ENCODE measurements at regions of chr19 and their contacts with region 1.

Region 1: DNA sequence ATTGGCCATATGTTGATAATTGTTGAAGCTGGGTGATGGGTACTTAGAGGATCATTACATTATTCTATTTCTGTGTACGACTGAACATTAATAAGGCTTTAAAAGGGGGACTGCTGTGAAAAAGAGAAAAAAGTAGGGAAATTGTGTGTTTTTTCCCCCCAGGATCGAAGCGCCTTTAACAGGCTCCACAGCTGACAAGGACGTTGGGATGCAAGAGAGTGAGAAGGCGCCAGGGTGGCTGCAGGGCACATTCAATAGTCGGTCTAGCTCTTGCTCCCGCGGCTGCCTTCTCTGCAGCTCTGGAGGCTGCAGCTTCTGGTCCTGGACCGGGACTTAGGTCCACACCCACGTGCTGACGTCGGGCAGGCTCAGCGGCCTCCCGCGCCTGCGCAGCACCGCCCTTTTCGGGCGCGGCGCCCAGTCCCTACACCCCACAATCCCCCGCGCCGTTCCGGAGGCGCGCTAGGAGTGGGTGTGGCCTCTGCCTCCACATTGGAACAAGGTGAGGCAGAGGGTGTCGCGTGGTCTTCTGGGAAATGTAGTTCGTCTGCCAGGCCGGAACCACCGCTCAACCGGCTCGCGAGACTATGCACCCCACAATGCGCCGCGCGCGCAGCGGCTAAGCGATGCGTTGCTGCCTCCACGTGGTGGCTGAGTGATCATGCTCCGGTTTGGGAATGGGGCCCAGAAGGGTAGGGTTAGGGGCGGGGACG is 4.9 kb upstream of the LRFN3 start:
- DNase-seq: peak; percentile 99 to 100 (median 99)
- ATAC-seq: peak; percentile 99
- H3K4me3 ChIP-seq: peak overlapping the region; percentile 13
- H3K27ac ChIP-seq: no peak overlapping the region
- H3K4me1 ChIP-seq: peaks cover 2 to 9% of the 10 kb centered on the region in 2 experiments; a peak in 2 of 5 replicates
- H3K27me3 ChIP-seq: peaks cover 7 to 16% of the 10 kb centered on the region in 2 experiments
- CTCF ChIP-seq: peak; percentile 95 to 98 (median 97)
- EP300 ChIP-seq: peak; percentile 8; the same call in 1 of the 2 replicates
- POLR2A ChIP-seq: peak; percentile 77
- RAD21 ChIP-seq: peak; percentile 100

Region 2: DNA sequence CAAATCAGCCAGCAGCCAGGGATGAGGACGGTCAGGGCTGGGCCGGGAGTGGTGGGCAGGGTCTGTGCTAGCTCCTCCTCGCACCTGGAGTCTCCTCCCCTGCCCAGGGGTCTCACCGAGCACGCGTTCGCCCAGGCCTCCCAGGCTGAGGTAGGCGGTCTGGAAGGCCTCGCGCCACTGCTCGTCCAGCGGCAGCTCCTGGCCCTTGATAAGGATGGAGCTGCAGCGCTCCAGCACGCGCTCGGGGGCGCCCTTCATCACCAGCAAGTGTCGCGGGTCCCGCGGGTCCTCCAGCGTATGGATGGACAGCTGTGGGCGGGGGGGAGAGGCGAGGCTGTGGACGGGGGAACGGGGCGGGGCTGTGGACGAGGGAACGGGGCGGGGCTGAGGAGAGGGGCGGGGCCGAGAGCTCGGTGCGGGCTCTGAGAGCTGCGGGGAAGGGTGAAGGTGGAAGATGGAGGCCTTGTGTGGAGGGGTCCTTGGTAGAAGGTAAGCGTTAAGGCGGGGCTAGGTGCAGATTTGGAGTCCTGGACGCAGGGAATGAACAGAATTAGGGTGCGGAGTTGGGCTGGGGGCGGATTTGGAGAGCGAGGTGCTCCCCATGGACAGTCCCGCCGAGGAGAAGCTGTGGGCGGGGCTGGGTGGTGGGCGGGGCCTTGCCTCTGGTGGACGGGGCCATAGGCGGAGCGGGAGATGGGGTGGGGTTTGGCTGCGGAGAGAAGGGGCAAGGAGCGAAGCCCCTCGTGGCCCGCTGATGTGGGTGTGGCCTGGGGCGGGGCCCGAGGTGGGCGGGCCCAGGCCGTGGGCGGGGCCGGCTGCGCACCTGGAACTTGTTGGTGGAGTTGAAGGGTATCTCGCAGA is 373.5 kb before region 1 on chr19:
- CTCF ChIA-PET with region 1: no interaction called
- POLR2A ChIA-PET with region 1: interaction called, 3 read pairs
- in situ Hi-C with region 1: no loop called
- intact Hi-C with region 1: loop called (anchors 5 kb)
- DNase-seq: peak; percentile 91 to 94 (median 93)
- ATAC-seq: peak; percentile 92
- H3K4me3 ChIP-seq: peak overlapping the region; percentile 55
- H3K27ac ChIP-seq: no peak overlapping the region
- H3K4me1 ChIP-seq: peaks cover 4 to 50% of the 10 kb centered on the region in 2 experiments; a peak in 3 of 5 replicates
- H3K27me3 ChIP-seq: peaks cover 28 to 50% of the 10 kb centered on the region in 2 experiments; a peak in 4 of 5 replicates
- CTCF ChIP-seq: peak; percentile 38 to 79 (median 45); a peak in 4 of 6 replicates
- EP300 ChIP-seq: no peak
- POLR2A ChIP-seq: no peak
- RAD21 ChIP-seq: peak in 1 of 2 experiments; percentile 42; a peak in 2 of 4 replicates

Region 3: DNA sequence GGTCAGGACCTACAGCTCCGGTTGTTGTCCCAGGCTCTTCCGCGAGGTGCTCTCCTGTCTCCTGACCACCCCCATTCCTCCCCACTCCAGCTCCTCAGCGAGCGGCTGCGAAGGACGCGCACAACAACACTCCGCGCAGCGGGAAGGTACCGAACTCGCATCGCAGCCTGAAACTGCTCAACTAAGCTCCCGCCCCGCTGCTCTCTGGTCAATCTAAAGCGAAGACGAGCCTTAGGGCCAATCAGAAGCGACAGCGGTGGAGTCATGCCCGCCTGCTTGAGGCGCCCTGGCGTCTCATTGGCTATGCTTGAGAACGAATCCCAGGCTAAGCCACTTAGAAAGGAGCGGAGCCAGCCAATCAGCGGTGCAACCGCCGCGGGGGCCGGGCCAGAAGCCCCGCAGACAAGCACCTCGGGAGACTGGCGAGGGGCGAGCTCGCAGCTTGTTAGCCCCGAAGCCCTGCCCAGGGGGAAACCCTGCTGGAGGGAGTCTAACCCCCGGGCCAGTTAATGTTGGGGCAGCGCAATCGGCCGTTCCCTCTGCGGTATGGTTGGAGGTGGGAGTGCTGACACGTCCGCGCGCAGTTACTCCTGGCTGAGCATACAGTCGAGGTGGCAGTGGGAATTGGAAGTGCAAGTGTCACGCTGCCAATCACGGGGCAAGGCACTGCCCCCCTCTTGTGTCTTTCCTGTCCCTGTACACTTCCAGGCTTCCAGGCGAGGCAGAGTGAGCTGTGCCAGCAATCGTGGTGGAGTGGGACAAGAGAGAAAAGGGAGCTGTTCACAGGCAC is 228.9 kb before region 1 on chr19:
- CTCF ChIA-PET with region 1: interaction called, 3 read pairs
- POLR2A ChIA-PET with region 1: no interaction called
- in situ Hi-C with region 1: loop called (anchors 5 kb)
- intact Hi-C with region 1: no loop called
- DNase-seq: peak; percentile 97 to 98 (median 98)
- ATAC-seq: peak; percentile 100
- H3K4me3 ChIP-seq: peak overlapping the region; percentile 46
- H3K27ac ChIP-seq: no peak overlapping the region; the same call in 2 of the 3 replicates
- H3K4me1 ChIP-seq: peaks cover 0 to 21% of the 10 kb centered on the region in 2 experiments; a peak in 3 of 5 replicates
- H3K27me3 ChIP-seq: peaks cover 2 to 15% of the 10 kb centered on the region in 2 experiments; a peak in 3 of 5 replicates
- CTCF ChIP-seq: no peak
- EP300 ChIP-seq: no peak
- POLR2A ChIP-seq: no peak
- RAD21 ChIP-seq: no peak

Region 4: GRCh38 chr19:35828692-35829301 is 102.5 kb before region 1 on chr19:
- CTCF ChIA-PET with region 1: no interaction called
- POLR2A ChIA-PET with region 1: no interaction called
- in situ Hi-C with region 1: no loop called
- intact Hi-C with region 1: loop called (anchors 10 kb)
- DNase-seq: peak; percentile 67 to 82 (median 74)
- ATAC-seq: peak; percentile 98
- H3K4me3 ChIP-seq: no peak overlapping the region
- H3K27ac ChIP-seq: no peak overlapping the region
- H3K4me1 ChIP-seq: no peaks in the 10 kb centered on the region; a peak in 1 of 5 replicates
- H3K27me3 ChIP-seq: peaks cover 16 to 35% of the 10 kb centered on the region in 2 experiments
- CTCF ChIP-seq: no peak
- EP300 ChIP-seq: no peak
- POLR2A ChIP-seq: no peak
- RAD21 ChIP-seq: no peak

Region 5: DNA sequence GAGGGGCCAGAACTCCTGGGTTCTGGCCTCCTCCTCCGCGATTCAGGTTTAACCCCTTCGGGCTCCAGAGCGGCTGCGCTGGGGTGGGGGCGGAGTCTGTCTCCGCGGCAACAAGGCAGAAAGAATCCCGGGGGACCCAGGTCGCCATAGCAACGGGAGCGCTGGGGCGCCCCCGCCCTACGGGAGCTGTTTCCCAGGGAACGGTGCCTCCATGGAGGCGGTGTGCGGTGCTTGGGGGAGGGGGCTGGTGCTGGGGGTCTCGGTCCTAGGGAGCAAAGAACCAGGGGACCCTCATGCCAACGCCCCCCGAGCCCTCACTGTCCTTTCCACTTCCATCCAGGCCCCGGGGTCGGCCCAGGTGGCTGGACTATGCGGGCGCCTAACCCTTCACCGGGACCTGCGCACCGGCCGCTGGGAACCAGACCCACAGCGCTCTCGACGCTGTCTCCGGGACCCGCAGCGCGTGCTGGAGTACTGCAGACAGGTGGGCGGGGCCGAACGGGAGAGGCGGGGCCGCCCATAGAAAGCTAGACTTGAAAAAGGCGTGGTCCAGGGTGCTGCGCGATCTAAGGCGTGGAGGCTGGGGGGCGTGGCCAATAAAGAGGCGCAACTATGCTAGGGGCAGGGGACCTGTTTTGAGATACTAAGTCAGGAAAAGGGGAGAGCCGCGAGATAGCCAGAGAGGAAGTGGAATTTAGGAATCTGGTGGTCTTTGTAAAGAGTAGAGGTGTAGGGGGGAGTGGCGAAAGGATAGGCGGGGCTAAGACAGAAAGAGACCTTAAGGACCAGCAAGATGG is 61.8 kb before region 1 on chr19:
- CTCF ChIA-PET with region 1: no interaction called
- POLR2A ChIA-PET with region 1: no interaction called
- in situ Hi-C with region 1: no loop called
- intact Hi-C with region 1: no loop called
- DNase-seq: peak; percentile 87 to 97 (median 89)
- ATAC-seq: peak; percentile 95
- H3K4me3 ChIP-seq: peak overlapping the region; percentile 45
- H3K27ac ChIP-seq: no peak overlapping the region; the same call in 2 of the 3 replicates
- H3K4me1 ChIP-seq: peaks cover 20 to 46% of the 10 kb centered on the region in 2 experiments
- H3K27me3 ChIP-seq: peaks cover 0 to 6% of the 10 kb centered on the region in 2 experiments; a peak in 2 of 5 replicates
- CTCF ChIP-seq: 0 out of 6 replicates have a peak, but pooled peaks of 1 of the 3 experiments have one; percentile 7
- EP300 ChIP-seq: no peak
- POLR2A ChIP-seq: no peak
- RAD21 ChIP-seq: no peak

Region 6: DNA sequence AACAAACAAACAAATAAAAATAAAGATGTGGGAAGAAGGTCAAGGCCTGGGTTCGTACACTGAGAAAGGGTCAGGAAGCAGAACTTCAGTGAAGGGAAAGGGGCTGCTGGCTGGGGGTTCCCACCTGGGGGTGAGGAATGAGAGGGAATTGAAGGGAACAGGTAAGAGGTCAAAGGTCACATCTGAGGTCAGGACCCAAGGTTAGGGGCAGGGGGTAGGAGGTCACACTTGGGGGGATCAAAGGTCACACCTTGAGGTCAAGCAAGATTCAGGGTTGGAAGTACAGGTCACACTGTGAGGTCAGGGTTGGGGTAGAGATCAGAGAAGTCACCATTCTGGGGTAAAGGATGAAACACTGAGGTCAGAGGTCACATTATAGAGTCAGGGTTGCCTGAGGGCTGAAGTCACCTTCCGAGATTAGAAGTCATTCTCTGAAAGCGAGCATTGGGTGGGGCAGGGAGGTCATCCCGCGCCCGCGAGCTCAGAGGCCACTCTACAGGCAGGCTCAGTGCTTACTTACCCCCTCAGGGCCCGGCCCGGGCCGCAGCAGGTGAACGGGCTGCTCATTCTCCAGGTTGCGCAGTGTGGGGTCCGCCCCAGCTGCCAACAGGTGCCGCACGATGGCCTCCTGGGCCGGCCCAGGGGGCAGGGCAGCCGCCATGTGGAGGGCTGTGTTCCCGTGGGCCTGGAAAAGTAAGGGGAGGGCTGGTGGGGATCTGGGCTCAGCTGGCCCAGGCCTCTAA is 41.8 kb before region 1 on chr19:
- CTCF ChIA-PET with region 1: interaction called, 3 read pairs
- POLR2A ChIA-PET with region 1: no interaction called
- in situ Hi-C with region 1: loop called (anchors 5 kb)
- intact Hi-C with region 1: no loop called
- DNase-seq: no peak
- ATAC-seq: no peak
- H3K4me3 ChIP-seq: no peak overlapping the region
- H3K27ac ChIP-seq: no peak overlapping the region
- H3K4me1 ChIP-seq: peaks cover 0 to 5% of the 10 kb centered on the region in 2 experiments; a peak in 1 of 5 replicates
- H3K27me3 ChIP-seq: no peaks in the 10 kb centered on the region
- CTCF ChIP-seq: no peak
- EP300 ChIP-seq: no peak
- POLR2A ChIP-seq: no peak
- RAD21 ChIP-seq: no peak

Region 7: DNA sequence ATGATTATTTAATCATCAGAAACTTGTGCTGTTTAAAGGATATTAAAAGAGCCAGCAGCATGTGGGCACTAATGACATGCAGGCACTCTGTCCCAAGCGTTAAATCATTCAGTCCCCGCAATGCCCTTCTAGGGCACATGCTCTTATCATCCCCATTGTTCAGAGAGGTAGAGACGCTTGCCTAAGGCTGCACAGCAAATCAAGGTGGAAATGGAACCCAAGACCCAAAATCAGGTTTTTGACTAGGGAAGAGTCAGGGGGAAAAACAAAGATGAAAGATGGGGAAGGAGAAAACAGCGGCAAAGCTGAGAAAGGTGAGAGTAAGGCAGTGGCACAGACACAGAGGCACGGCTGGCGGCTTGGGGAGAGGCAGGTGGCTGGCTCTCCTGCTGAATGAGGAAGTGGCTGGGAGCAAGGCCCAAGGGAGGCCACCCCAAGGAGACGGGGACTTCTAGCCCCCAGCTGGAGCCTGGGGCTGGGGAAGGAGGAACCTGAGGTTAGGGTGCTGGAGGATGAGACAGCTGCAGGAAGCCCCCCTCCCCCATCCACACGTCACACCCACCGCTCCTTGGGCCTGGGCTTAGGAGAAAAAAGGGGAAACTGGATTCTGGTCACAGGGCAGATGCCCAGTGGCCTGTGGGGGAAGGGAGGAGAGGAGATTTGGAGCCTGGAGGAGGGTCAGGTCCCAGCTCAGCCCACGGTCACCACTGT is 22.2 kb before region 1 on chr19:
- CTCF ChIA-PET with region 1: no interaction called
- POLR2A ChIA-PET with region 1: no interaction called
- in situ Hi-C with region 1: no loop called
- intact Hi-C with region 1: no loop called
- DNase-seq: peak in 3 of 4 experiments; percentile 39 to 61 (median 59)
- ATAC-seq: peak; percentile 50
- H3K4me3 ChIP-seq: no peak overlapping the region
- H3K27ac ChIP-seq: peak overlapping the region; percentile 57; the same call in 1 of the 3 replicates
- H3K4me1 ChIP-seq: peaks cover 31 to 33% of the 10 kb centered on the region in 2 experiments
- H3K27me3 ChIP-seq: no peaks in the 10 kb centered on the region
- CTCF ChIP-seq: no peak
- EP300 ChIP-seq: no peak; the same call in 1 of the 2 replicates
- POLR2A ChIP-seq: no peak
- RAD21 ChIP-seq: no peak

Region 8: DNA sequence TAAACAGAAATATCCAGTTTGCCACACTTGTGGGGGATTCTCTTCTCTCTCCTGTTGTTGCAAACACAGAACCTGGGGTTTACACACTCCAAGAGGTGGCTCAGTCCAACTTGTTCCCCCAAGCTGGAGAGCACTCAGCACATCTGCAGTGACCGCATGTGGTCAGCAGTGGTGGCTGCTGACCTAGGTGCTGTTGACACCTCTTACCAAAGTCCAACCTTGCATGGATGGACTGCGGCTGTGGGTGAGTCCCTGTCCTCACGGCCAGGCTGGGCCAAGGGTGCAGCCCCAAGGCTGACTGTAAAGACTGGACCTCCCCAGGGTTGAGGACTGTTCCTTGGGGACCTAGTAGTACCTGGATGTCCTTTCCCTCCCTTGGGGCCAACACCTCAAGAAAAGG is 10.9 kb after region 1 on chr19:
- CTCF ChIA-PET with region 1: no interaction called
- POLR2A ChIA-PET with region 1: no interaction called
- in situ Hi-C with region 1: no loop called
- intact Hi-C with region 1: no loop called
- DNase-seq: no peak
- ATAC-seq: no peak
- H3K4me3 ChIP-seq: no peak overlapping the region
- H3K27ac ChIP-seq: no peak overlapping the region
- H3K4me1 ChIP-seq: peaks cover 0 to 26% of the 10 kb centered on the region in 2 experiments; a peak in 3 of 5 replicates
- H3K27me3 ChIP-seq: peaks cover 38 to 76% of the 10 kb centered on the region in 2 experiments
- CTCF ChIP-seq: no peak
- EP300 ChIP-seq: no peak
- POLR2A ChIP-seq: no peak
- RAD21 ChIP-seq: no peak

Measured in K562 (cell line).